Right ventricle myocardium superior (tissue), 1 donor: ENCODE measurements at regions of chr1 and their contacts with region 1.

Region 1: GRCh38 chr1:160085686-160086455 is 4.5 kb downstream of the KCNJ9 start:
- DNase-seq: peak; percentile 91
- ATAC-seq: peak; percentile 82

Region 2: DNA sequence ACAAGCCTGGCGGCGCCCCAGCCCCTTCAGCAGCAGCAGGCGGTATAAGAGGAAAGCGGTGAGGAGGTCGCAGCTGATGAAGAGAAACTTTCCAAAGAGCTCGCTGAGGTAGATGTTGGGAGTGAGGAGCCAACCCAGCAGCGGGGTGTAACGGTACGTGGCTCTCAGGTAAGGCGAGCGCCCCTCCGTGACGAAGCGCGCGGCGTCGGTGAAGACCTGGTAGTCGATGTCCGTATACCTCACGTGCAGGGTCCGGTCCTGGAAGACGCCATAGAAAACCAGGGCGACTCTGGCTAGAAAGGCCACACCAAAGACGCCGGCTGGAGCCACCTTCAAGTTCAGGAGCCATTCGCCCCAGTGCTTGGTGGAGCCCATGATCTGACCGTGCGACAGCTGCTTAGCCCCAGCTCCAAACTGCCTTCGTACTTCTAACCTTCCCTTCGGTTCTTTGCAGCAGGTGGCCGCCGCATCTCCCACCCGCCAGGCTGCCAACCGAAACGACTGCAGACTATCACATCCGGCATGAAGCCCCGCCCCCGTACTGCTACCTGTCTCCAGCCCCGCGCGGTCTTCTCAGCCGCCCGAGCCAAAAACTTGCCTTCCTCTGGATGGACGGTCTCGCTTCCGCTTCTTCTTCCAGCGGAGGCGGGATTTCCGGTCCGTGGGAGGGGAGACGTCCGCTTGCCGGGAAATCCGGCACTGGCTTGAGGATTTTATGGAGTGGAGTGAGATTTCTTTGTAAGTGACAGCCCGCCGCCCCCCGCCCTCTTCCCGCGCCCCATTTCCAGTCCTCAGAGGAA is 54.3 kb before region 1 on chr1 and contains the start of gene PIGM:
- intact Hi-C with region 1: no loop called
- DNase-seq: peak; percentile 96
- ATAC-seq: peak; percentile 98
- total RNA-seq, gene PIGM: 2.0 TPM

Region 3: DNA sequence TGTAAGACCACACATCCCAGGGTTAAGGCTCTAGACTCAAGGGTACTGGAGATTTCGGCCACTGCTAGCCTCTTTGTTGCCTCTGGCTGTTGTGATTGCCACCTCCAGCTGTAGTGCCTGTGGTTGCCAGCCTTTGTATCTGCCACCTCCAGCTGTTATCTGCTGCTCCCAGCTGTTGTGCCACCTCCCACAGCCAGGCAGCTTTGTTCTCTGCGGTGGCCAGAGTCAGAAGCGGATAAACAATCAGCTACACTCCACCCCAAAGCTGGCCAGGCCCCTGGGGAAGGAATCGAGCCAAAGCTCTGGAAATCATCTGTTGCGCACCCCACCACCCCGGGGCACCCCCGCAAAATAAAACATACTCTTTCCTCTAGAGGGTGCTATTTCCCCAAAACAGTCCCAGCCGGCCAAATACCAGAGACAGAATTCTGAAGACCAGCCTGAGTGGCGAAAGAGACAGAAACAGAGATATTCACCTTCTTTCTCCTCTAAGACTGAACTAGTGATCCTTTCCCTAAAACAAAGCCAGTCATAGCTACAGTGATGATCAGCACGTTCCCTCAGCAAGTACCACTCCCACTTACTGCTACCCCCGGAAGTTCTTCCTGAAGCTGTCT is 39.3 kb before region 1 on chr1:
- intact Hi-C with region 1: loop called (anchors 5 kb)
- DNase-seq: peak; percentile 68
- ATAC-seq: peak; percentile 91

Region 4: GRCh38 chr1:160376525-160377131 is 290.8 kb after region 1 on chr1:
- intact Hi-C with region 1: loop called (anchors 10 kb)
- DNase-seq: no peak
- ATAC-seq: peak; percentile 90